ENCODE measurements at regions of chr4 and their contacts with region 1.

Region 1: DNA sequence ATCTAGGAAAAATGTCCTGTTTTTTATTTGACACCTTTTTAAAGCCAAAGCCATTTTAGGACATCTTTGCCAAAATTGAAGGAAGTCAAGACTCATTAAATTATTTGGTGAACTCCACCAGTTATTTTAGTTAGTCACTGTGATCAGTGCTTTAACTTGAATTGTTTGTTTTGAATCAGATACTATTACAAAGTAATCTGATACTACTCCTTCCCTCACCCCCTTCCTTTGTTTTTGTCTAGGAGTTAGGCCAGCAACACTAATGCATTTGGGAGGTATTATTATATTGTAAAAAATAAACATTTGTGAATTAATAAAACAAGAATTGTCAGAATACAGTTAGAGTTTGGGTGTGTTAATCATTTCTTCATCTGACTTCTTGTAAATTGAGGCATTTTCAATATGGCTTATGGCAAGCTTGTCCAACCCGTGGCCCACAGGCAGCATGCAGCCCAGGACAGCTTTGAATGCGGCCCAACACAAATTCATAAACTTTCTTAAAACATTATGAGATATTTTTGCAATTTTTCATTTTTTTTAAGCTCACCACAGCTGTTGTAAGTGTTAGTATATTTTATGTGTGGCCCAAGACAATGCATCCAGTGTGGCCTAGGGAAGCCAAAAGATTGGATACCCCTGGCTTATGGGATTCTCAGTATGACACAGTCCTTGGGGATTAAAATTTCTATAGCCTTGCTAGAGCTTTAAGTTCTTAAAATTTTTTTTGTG is 182.2 kb downstream of the BMPR1B start:
- DNase-seq: no peak
- H3K4me3 ChIP-seq: no peak overlapping the region
- H3K27ac ChIP-seq: peak overlapping the region in 1 of 59 donors; percentile 25
- H3K27me3 ChIP-seq: no peaks in the 10 kb centered on the region
- CTCF ChIP-seq: no peak

Region 2: GRCh38 chr4:94634271-94634670 is 305.7 kb before region 1 on chr4:
- intact Hi-C with region 1: loop called in 1 of 2 experiments (anchors 5 kb)
- DNase-seq: no peak
- H3K4me3 ChIP-seq: no peak overlapping the region
- H3K27ac ChIP-seq: no peak overlapping the region
- H3K27me3 ChIP-seq: no peaks in the 10 kb centered on the region
- CTCF ChIP-seq: no peak

Region 3: DNA sequence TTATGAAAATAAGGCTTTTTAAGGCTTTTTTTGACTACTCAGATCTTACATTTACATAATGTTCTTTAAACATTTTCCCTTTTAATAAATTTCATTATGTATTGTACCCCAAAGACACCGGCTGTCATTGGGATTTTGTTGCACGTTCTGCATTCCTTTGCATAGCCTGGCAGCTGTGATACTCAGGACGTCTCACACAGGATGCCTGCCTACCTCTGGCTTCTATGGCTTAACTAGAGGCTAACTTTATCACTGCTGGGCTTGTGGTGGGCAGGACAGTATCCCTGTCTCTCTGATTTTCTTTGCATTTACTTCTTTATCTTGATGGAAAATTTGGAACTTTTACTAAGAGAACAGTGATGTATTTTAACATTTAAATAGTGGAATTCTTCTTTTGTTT is 34.4 kb before region 1 on chr4:
- intact Hi-C with region 1: no loop called
- DNase-seq: no peak
- H3K4me3 ChIP-seq: no peak overlapping the region
- H3K27ac ChIP-seq: no peak overlapping the region
- H3K27me3 ChIP-seq: no peaks in the 10 kb centered on the region
- CTCF ChIP-seq: no peak

Region 4: DNA sequence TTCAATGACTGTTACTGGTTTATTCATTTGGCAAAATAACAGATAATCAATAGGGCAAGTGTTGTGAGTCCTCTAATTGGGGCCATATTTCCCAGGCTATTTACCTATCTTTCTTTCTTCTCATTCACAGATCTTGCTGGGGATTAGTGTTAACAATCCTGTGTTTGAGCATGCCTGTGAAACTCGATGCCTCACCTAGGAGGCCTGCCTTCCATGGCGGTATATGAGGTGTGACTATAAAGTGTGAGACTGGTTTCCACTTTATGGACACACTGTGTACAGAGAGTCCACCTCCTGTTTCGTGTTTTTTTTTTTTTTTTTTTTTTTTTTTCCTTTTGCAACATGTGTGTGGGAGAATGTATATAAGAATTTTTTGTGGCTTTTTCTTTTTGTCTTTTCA is 17.1 kb after region 1 on chr4:
- intact Hi-C with region 1: no loop called
- DNase-seq: no peak
- H3K4me3 ChIP-seq: no peak overlapping the region
- H3K27ac ChIP-seq: no peak overlapping the region
- H3K27me3 ChIP-seq: no peaks in the 10 kb centered on the region
- CTCF ChIP-seq: no peak